B cell (primary cell): ENCODE measurements at regions of chr17 and their contacts with region 1.

Region 1: DNA sequence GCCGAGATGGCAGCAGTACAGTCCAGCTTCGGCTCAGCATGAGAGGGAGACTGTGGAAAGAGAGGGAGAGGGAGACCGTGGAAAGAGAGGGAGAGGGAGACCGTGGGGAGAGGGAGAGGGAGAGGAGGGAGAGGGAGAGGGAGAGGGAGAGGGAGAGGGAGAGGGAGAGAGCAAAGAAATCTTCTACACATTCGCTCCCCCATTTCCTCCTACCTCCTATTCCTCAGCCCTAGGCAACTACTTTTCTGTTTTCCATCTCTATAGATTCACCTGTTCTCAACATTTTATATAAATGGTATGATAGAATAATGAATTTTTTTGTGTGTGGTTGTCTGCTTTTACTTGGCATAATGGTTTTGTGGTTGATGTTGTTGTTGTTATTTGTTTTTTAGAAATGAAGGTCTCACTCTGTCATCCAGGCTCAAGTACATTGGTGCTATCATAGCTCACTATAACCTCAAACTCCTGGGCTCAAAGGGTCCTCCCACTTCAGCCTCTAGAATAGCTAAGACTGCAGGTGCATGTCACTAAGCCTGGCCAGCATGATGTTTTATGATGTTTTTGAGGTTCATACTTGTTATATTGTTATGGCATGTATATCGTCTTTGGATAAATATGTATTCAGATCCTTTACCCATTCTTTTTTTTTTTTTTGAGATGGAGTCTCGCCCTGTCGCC is 6.0 kb upstream of the PRPF8 start:
- DNase-seq: no peak
- ATAC-seq: no peak
- H3K4me3 ChIP-seq: no peak overlapping the region
- H3K4me3 Mint-ChIP-seq: no peak overlapping the region
- H3K27ac ChIP-seq: no peak overlapping the region
- H3K27ac Mint-ChIP-seq: no peak overlapping the region
- H3K4me1 ChIP-seq: no peaks in the 10 kb centered on the region
- H3K4me1 Mint-ChIP-seq: peaks cover 2% of the 10 kb centered on the region
- H3K27me3 ChIP-seq: peaks cover 0 to 3% (median 0%) of the 10 kb centered on the region in 4 experiments
- H3K27me3 Mint-ChIP-seq: peaks cover 13% of the 10 kb centered on the region
- CTCF ChIP-seq: no peak

Region 2: GRCh38 chr17:1286379-1287106 is 404.1 kb before region 1 on chr17:
- CTCF ChIA-PET with region 1: no interaction called
- POLR2A ChIA-PET with region 1: interaction called, 12 read pairs
- intact Hi-C with region 1: no loop called
- DNase-seq: no peak
- ATAC-seq: no peak
- H3K4me3 ChIP-seq: no peak overlapping the region
- H3K4me3 Mint-ChIP-seq: no peak overlapping the region
- H3K27ac ChIP-seq: no peak overlapping the region
- H3K27ac Mint-ChIP-seq: no peak overlapping the region
- H3K4me1 ChIP-seq: no peaks in the 10 kb centered on the region
- H3K4me1 Mint-ChIP-seq: no peaks in the 10 kb centered on the region
- H3K27me3 ChIP-seq: no peaks in the 10 kb centered on the region
- H3K27me3 Mint-ChIP-seq: no peaks in the 10 kb centered on the region
- CTCF ChIP-seq: no peak

Region 3: GRCh38 chr17:1989135-1989534 is 298.5 kb after region 1 on chr17:
- CTCF ChIA-PET with region 1: no interaction called
- POLR2A ChIA-PET with region 1: no interaction called
- intact Hi-C with region 1: no loop called
- DNase-seq: no peak
- ATAC-seq: no peak
- H3K4me3 ChIP-seq: no peak overlapping the region
- H3K4me3 Mint-ChIP-seq: no peak overlapping the region
- H3K27ac ChIP-seq: no peak overlapping the region
- H3K27ac Mint-ChIP-seq: no peak overlapping the region
- H3K4me1 ChIP-seq: no peaks in the 10 kb centered on the region
- H3K4me1 Mint-ChIP-seq: no peaks in the 10 kb centered on the region
- H3K27me3 ChIP-seq: peaks cover 0 to 3% (median 0%) of the 10 kb centered on the region in 4 experiments
- H3K27me3 Mint-ChIP-seq: peaks cover 23% of the 10 kb centered on the region
- CTCF ChIP-seq: no peak